B cell (primary cell): ENCODE measurements at regions of chr6 and their contacts with region 1.

Region 1: DNA sequence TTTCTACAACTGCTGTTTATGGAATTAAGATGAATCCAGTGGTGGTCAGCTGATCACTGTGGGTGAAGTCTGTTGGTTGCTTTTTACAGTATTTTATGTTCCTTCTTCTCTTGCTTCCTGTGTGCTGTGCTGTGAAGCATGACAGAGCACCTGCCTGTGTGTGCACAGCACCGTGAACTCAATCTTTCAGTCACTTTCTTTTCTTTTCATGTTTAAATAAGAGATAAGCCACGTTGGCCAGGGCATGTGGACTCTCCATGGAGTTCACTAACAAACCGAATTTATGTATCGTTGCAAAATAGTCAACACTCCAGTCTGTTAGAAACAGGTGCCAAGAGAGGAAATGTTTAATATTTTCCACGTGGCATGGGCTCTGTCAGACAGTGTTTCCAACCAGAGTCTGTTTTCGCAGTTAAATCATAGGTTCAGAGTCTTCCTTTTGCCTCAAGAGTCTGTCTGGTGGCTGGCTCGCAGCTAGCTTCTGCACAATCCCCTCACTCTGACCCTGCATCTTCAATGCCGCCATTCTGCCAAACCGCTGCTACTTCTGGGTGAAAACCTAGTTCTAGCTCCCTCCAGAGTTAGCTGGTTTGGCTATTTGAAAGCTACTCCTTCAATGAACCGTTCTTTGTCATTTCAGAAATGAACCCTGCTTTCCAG is 73.2 kb downstream of the QRSL1 start:
- DNase-seq: peak; percentile 82
- ATAC-seq: peak; percentile 88
- H3K4me3 ChIP-seq: peak overlapping the region; percentile 18 to 45 (median 33)
- H3K4me3 Mint-ChIP-seq: peak overlapping the region; percentile 79
- H3K27ac ChIP-seq: peak overlapping the region; percentile 90 to 94
- H3K27ac Mint-ChIP-seq: peak overlapping the region; percentile 98
- H3K4me1 ChIP-seq: peaks cover 72 to 75% of the 10 kb centered on the region in 2 donors
- H3K4me1 Mint-ChIP-seq: peaks cover 89% of the 10 kb centered on the region
- H3K27me3 ChIP-seq: no peaks in the 10 kb centered on the region
- H3K27me3 Mint-ChIP-seq: no peaks in the 10 kb centered on the region
- CTCF ChIP-seq: no peak

Region 2: DNA sequence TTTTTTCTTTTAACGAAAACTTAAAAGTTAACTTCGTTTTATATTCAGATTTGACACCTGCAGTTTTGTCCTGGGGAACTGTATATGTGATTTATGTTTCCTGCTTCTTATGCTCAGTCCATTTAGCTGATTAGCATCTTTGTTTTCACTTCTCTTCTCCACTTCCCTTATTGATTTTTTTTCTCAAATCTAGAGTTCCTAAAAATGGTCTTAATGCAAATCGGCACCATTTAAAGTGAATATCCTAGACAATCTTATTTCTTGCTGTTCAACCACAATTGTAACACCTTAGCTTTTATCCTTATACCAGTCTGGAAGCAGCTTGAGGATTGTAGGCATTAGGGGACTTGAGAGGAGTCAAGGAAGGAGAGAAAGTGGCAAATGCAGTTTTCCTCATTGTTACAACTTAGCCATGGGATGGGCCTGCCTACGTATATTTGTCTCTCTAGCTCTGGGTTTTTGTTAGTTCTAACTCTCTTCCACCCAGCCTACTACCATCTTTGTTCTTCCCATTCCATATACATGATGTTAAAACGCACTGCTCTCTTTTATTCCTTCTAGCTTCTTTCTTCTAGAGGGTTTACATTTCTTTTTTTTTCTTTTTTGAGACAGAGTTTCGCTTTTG is 64.8 kb before region 1 on chr6:
- CTCF ChIA-PET with region 1: interaction called, 8 read pairs
- POLR2A ChIA-PET with region 1: interaction called, 3 read pairs
- intact Hi-C with region 1: loop called (anchors 2 kb)
- DNase-seq: peak; percentile 79
- ATAC-seq: peak; percentile 85
- H3K4me3 ChIP-seq: peak overlapping the region; percentile 25 to 59 (median 35)
- H3K4me3 Mint-ChIP-seq: peak overlapping the region; percentile 74
- H3K27ac ChIP-seq: peak overlapping the region; percentile 81 to 89
- H3K27ac Mint-ChIP-seq: peak overlapping the region; percentile 95
- H3K4me1 ChIP-seq: peaks cover 64 to 68% of the 10 kb centered on the region in 2 donors
- H3K4me1 Mint-ChIP-seq: peaks cover 64% of the 10 kb centered on the region
- H3K27me3 ChIP-seq: no peaks in the 10 kb centered on the region
- H3K27me3 Mint-ChIP-seq: no peaks in the 10 kb centered on the region
- CTCF ChIP-seq: no peak

Region 3: DNA sequence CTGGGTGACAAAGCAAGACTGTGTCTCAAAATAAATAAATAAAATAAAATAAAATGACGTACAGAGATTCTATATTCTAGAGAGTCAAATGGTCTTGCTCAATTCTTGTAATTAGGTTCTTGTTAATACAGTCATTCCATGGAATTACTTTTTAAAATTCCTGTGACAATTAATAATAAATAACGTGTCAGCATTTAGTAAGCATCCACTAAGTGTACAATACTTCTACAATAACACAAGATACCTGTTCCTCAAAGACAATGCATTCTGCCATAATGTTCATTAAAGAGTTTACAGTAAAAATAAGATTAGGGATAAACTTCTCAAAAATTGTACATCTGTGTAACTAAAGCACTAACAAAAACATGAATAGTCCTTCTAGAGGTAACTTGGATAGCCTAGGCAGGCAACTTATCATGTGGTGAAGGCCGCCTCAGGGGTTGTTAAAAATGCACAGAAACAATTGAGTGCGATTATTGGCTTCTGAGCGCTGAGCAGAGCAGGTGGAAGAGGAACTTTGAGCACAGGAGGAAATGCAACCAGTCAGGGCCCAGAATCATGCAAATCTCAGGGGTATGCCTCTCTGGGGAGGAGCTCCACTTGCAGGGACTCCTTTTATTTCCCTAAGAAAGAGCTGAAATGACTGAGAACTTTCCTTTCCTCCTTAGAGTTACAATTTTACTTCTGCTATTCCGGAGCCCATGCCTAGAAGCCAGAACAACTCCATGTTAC is 36.1 kb before region 1 on chr6:
- CTCF ChIA-PET with region 1: interaction called, 12 read pairs
- POLR2A ChIA-PET with region 1: interaction called, 4 read pairs
- intact Hi-C with region 1: loop called (anchors 1 kb)
- DNase-seq: peak; percentile 86
- ATAC-seq: peak; percentile 99
- H3K4me3 ChIP-seq: peak overlapping the region in 2 of 5 experiments; percentile 2 to 29
- H3K4me3 Mint-ChIP-seq: peak overlapping the region; percentile 80
- H3K27ac ChIP-seq: peak overlapping the region; percentile 30 to 81
- H3K27ac Mint-ChIP-seq: peak overlapping the region; percentile 93
- H3K4me1 ChIP-seq: peaks cover 49 to 61% of the 10 kb centered on the region in 2 donors
- H3K4me1 Mint-ChIP-seq: peaks cover 64% of the 10 kb centered on the region
- H3K27me3 ChIP-seq: no peaks in the 10 kb centered on the region
- H3K27me3 Mint-ChIP-seq: no peaks in the 10 kb centered on the region
- CTCF ChIP-seq: no peak

Region 4: DNA sequence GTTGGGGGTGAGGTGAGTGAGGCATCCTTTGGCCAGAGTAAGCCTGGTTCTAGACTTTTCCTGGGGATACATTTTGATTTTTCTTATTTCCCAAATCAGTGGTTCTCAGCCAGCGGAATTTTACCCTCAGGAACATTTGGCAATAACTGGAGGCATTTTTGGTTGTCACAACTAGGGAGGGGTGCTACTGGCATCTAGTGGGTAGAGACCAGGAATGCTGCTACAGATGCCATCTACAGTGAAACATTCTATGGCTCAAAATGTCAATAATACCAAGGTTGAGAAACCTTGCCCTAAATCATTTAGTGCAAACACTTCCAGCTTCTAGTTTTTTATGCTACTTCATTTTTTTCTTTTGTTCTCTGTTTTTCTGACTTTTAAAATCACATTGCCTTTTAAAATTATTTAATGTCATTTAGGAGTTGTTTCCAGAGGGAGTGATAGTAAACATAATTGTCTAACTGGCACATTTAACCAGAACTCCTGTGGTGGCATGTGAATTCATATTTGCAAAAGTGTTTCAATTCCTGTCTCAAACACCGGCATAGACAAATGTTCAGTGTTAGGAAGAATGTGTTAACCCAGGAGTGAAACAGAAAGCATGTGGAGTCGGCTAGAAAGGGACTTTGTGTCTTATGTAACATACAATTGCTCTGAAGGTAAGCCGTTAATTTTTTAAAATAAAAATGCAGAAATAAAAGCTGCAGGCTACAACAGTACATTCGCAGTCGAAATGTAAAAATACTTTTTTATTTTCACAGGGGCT is 14.2 kb before region 1 on chr6:
- CTCF ChIA-PET with region 1: interaction called, 12 read pairs
- POLR2A ChIA-PET with region 1: interaction called, 4 read pairs
- intact Hi-C with region 1: no loop called
- DNase-seq: peak; percentile 32
- ATAC-seq: peak; percentile 33
- H3K4me3 ChIP-seq: peak overlapping the region in 1 of 5 experiments; percentile 1
- H3K4me3 Mint-ChIP-seq: peak overlapping the region; percentile 29
- H3K27ac ChIP-seq: no peak overlapping the region
- H3K27ac Mint-ChIP-seq: peak overlapping the region; percentile 26
- H3K4me1 ChIP-seq: peaks cover 19 to 30% of the 10 kb centered on the region in 2 donors
- H3K4me1 Mint-ChIP-seq: peaks cover 32% of the 10 kb centered on the region
- H3K27me3 ChIP-seq: no peaks in the 10 kb centered on the region
- H3K27me3 Mint-ChIP-seq: no peaks in the 10 kb centered on the region
- CTCF ChIP-seq: no peak

Region 5: GRCh38 chr6:106715922-106716321 is 13.3 kb after region 1 on chr6:
- CTCF ChIA-PET with region 1: interaction called, 12 read pairs
- POLR2A ChIA-PET with region 1: interaction called, 9 read pairs
- intact Hi-C with region 1: loop called (anchors 1 kb)
- DNase-seq: peak; percentile 58
- ATAC-seq: peak; percentile 53
- H3K4me3 ChIP-seq: peak overlapping the region in 4 of 5 experiments; percentile 25 to 55 (median 41)
- H3K4me3 Mint-ChIP-seq: peak overlapping the region; percentile 88
- H3K27ac ChIP-seq: peak overlapping the region; percentile 76
- H3K27ac Mint-ChIP-seq: peak overlapping the region; percentile 93
- H3K4me1 ChIP-seq: peaks cover 43 to 48% of the 10 kb centered on the region in 2 donors
- H3K4me1 Mint-ChIP-seq: peaks cover 54% of the 10 kb centered on the region
- H3K27me3 ChIP-seq: no peaks in the 10 kb centered on the region
- H3K27me3 Mint-ChIP-seq: no peaks in the 10 kb centered on the region
- CTCF ChIP-seq: no peak

Region 6: GRCh38 chr6:106844930-106845329 is 142.3 kb after region 1 on chr6:
- CTCF ChIA-PET with region 1: no interaction called
- POLR2A ChIA-PET with region 1: no interaction called
- intact Hi-C with region 1: loop called (anchors 5 kb)
- DNase-seq: peak; percentile 49
- ATAC-seq: no peak
- H3K4me3 ChIP-seq: no peak overlapping the region
- H3K4me3 Mint-ChIP-seq: peak overlapping the region; percentile 8
- H3K27ac ChIP-seq: peak overlapping the region in 1 of 2 donors; percentile 77
- H3K27ac Mint-ChIP-seq: peak overlapping the region; percentile 23
- H3K4me1 ChIP-seq: peaks cover 40 to 49% of the 10 kb centered on the region in 2 donors
- H3K4me1 Mint-ChIP-seq: peaks cover 47% of the 10 kb centered on the region
- H3K27me3 ChIP-seq: no peaks in the 10 kb centered on the region
- H3K27me3 Mint-ChIP-seq: no peaks in the 10 kb centered on the region
- CTCF ChIP-seq: no peak